ENCODE measurements at regions of chr17 and their contacts with region 1.

Region 1: DNA sequence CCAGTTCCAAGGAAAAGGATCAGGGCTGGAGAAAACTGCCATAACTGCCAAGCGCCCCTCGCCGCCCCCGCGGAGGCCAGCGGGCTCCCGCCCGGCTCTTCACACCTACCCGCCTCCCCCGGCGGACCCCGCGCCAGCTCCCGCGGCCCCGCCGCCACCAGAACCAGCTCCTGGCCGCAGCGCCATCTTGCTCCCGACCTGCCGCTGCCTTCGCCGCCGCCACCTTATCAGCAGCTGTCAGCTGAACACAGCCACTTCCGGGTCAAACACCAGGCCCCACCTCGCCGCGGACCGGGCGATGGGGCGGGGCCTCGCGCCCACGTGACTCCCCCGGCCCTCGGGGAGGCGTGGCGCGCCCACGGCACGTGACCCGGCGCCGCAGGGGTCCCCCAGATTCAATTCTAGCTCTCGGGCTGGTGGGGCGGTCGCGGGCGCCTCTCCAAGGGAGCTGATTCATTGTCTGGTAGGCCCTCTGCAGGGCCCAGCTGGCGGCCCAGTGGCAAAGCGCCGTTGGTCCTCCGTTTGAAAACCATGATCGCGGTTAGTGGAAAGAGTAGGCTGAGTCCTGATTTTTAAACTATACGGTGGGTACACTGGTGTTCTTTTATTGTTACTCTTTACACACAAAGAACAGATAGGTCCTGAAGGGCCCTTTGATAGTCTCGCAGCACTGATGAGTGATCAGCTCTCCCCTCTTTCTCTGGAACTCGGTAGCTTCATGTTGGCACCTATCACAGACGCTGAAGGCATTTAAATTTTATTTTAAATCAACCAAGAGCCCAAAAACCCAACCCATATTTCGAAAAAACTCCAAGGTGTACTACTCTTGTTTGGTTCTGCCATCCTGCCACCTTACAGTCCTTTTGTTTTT is at the start of gene SYNRG:
- DNase-seq: no peak
- ATAC-seq: peak; percentile 98
- H3K4me3 ChIP-seq: peak within 1 kb of the TSS; percentile 66 to 75
- H3K27ac ChIP-seq: peak within 1 kb of the TSS; percentile 92
- H3K4me1 ChIP-seq: peaks cover 6% of the 10 kb centered on the region
- H3K27me3 ChIP-seq: no peaks in the 10 kb centered on the region
- CTCF ChIP-seq: 0 out of 2 replicates have a peak, but pooled peaks have one; percentile 9
- total RNA-seq, gene SYNRG: 30.8 TPM

Region 2: DNA sequence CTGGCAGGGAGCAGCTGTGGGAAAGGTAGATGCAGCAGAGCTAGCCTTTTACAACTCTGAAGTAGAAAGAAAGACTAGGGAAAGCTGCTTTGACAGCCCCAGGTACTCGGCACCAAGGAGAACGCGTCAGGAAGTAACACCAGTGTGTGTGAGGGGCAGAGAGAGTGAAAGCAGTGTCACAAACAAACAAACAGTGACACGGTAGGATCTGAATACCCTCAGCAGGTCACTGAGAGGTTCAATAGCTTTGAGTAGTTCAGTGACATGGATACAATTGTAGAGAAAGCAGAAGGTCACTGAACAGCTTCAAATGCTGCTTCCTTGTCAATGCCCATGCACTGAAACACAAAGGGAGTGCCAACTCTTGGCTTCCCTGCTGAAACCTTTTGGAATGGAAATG is 383.9 kb before region 1 on chr17:
- CTCF ChIA-PET with region 1: no interaction called
- POLR2A ChIA-PET with region 1: interaction called, 10 read pairs
- in situ Hi-C with region 1: no loop called
- intact Hi-C with region 1: no loop called
- DNase-seq: no peak
- ATAC-seq: no peak
- H3K4me3 ChIP-seq: no peak overlapping the region
- H3K27ac ChIP-seq: no peak overlapping the region
- H3K4me1 ChIP-seq: no peaks in the 10 kb centered on the region
- H3K27me3 ChIP-seq: no peaks in the 10 kb centered on the region
- CTCF ChIP-seq: no peak

Region 3: DNA sequence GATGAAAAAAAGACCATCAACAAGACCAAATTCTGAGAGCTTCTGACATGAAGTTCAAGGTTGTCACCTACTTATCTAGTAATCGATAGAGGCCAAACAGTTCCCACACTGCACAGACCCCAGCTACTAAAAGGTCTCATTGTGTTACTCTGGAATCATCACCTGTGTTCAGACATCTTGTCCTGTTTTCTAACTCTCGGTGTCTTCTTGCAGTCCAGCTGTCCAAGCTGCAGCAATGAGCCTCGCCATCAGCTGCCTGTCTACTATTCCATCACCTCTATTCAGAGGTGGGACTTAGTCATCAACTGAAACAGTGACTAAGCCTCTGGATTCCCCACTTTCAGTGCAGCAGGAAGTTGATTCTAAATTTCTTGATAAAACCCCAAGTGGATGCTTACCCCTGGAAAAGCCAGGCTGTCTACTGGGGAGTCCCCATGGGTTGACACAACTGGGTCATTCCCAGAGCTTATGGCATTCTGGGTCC is 88.8 kb after region 1 on chr17:
- CTCF ChIA-PET with region 1: no interaction called
- POLR2A ChIA-PET with region 1: no interaction called
- in situ Hi-C with region 1: no loop called
- intact Hi-C with region 1: no loop called
- DNase-seq: no peak
- ATAC-seq: no peak
- H3K4me3 ChIP-seq: no peak overlapping the region
- H3K27ac ChIP-seq: no peak overlapping the region
- H3K4me1 ChIP-seq: no peaks in the 10 kb centered on the region
- H3K27me3 ChIP-seq: no peaks in the 10 kb centered on the region
- CTCF ChIP-seq: no peak

Region 4: DNA sequence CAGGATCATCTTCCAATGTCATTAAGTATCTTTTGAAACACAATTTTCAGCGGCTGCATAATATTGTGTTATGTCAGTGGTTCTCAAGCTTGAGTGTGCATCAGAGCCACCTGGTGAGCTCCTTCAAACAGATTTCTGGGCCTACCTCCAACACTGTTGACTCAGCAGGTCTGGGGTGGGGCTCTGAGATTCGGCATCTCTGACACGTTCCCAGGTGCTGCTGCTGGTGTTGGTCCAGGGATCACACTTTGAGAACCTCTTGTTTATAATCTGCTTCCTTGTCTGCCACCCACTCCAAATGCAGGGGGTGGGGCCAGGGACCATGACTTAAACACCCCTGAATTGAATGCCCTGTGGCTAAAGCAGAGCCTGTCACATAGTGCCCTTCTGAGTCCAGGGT is 209.3 kb after region 1 on chr17:
- CTCF ChIA-PET with region 1: interaction called, 14 read pairs
- POLR2A ChIA-PET with region 1: no interaction called
- in situ Hi-C with region 1: no loop called
- intact Hi-C with region 1: no loop called
- DNase-seq: no peak
- ATAC-seq: no peak
- H3K4me3 ChIP-seq: no peak overlapping the region
- H3K27ac ChIP-seq: no peak overlapping the region
- H3K4me1 ChIP-seq: no peaks in the 10 kb centered on the region
- H3K27me3 ChIP-seq: no peaks in the 10 kb centered on the region
- CTCF ChIP-seq: no peak